A549 (cell line): ENCODE measurements at regions of chr4 and their contacts with region 1.

Region 1: GRCh38 chr4:87235020-87235671 is 14.7 kb upstream of the KLHL8 start:
- DNase-seq: no peak
- ATAC-seq: peak in 1 of 2 experiments; percentile 43; a peak in 3 of 6 replicates
- H3K4me3 ChIP-seq: peak overlapping the region; percentile 47
- H3K27ac ChIP-seq: peak overlapping the region; percentile 77 to 84
- H3K4me1 ChIP-seq: peaks cover 39% of the 10 kb centered on the region
- CTCF ChIP-seq: no peak
- EP300 ChIP-seq: no peak
- POLR2A ChIP-seq: no peak
- RAD21 ChIP-seq: no peak

Region 2: DNA sequence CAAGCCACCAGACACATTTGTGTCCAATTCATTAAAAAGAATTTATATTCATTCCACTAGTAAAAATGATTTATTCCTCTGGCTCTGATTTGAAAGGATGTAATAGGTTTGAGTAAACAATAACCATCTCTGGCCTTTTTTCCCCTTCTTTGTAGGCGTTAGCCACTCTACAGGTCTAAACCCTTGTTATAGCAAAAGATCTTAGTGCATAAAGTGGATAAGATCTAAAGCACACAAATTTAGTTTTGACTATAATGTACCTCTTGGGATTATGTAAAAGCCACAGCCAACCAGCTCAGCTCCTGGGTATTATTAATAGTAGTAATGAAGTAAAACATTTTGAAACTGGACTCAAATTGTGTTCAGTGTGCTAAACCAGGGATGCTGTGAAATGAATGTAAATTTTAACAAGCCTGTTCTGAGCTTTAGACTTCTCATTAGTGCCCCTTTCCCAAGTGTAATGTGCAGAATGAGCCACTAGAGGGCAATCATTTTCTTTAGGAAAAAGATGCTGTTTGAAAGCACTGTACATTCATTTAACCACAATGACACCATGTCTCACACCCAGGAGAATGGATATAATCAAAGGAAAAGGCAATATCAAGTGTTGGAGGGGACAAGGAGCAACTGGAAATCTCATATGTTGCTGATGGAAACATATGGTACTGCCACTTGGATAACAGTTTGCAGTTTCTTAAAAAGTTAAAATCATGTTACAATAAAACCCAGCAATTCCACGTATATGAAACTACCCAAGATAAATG is 84.5 kb before region 1 on chr4:
- CTCF ChIA-PET with region 1: interaction called, 17 read pairs
- POLR2A ChIA-PET with region 1: no interaction called
- DNase-seq: peak; percentile 13 to 63
- ATAC-seq: peak; percentile 62 to 79; a peak in 4 of 6 replicates
- H3K4me3 ChIP-seq: no peak overlapping the region
- H3K27ac ChIP-seq: no peak overlapping the region
- H3K4me1 ChIP-seq: no peaks in the 10 kb centered on the region
- CTCF ChIP-seq: peak; percentile 72
- EP300 ChIP-seq: no peak
- POLR2A ChIP-seq: no peak
- RAD21 ChIP-seq: peak; percentile 70 to 76

Region 3: DNA sequence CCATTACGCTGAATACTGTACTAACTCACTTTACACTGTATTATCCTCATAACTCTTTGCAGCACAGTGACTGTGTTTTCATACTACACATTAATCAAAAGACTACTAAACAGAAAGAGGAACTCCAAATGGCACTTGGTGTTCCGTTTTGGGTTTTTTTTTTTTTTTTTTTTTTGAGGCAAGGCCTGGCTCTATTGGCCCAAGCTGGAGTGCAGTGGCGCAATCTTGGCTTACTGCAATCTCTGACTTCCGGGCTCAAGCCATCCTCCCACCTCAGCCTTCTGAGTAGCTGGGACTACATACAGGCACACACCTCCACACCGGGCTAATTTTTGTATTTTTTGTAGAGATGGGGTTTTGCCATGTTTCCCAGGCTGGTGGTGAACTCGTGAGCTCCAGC is 25.4 kb before region 1 on chr4:
- CTCF ChIA-PET with region 1: no interaction called
- POLR2A ChIA-PET with region 1: no interaction called
- DNase-seq: no peak
- ATAC-seq: no peak
- H3K4me3 ChIP-seq: no peak overlapping the region
- H3K27ac ChIP-seq: no peak overlapping the region
- H3K4me1 ChIP-seq: 0 out of 3 replicates have a peak, but pooled peaks cover 3% of the 10 kb centered on the region
- CTCF ChIP-seq: no peak
- EP300 ChIP-seq: no peak
- POLR2A ChIP-seq: no peak
- RAD21 ChIP-seq: no peak

Region 4: GRCh38 chr4:87224141-87224923 is 10.8 kb before region 1 on chr4:
- CTCF ChIA-PET with region 1: interaction called, 13 read pairs
- POLR2A ChIA-PET with region 1: interaction called, 5 read pairs
- DNase-seq: no peak
- ATAC-seq: no peak
- H3K4me3 ChIP-seq: no peak overlapping the region
- H3K27ac ChIP-seq: no peak overlapping the region
- H3K4me1 ChIP-seq: peaks cover 8% of the 10 kb centered on the region
- CTCF ChIP-seq: no peak
- EP300 ChIP-seq: no peak
- POLR2A ChIP-seq: no peak
- RAD21 ChIP-seq: no peak